ENCODE measurements at regions of chr3 and their contacts with region 1.

Region 1: DNA sequence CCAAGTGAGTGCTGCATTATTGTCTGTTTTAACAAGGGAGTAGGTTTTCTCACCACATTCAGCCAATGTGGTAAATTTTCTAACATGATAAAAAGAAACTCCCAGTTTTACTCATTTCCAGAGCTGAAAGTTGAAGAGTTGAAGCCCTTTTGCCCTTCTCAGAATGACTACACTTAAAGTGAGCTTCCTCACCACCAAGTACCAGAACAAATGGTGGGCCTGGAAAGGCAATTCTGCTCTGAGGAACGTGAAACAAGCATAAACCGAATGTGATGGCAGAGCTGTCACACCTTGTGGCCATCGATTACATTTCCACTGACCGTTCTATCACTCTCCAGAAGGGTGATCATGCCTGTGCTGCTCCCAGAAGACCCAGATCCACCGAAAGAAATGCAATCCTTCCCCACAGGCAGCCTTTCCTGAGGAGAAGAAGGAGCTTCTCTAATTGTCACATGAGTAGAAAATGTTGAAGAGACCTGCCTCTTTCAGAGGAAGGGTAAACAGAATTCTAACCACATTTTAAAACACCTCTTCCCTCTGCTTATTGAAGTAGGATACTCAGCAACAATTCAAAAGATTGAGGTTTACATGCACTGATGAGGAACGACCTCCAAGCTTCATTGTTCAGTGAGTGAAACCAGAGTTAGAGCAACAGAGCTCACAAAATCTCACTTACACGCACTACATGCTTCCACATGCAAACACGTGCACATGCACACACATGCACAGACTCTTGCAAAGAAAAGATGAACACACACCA is 21.4 kb upstream of the CCR9 start:
- DNase-seq: peak; percentile 79
- H3K4me3 Mint-ChIP-seq: peak overlapping the region; percentile 46
- H3K27ac Mint-ChIP-seq: peak overlapping the region; percentile 39
- H3K4me1 Mint-ChIP-seq: peaks cover 41% of the 10 kb centered on the region
- H3K27me3 Mint-ChIP-seq: peaks cover 58% of the 10 kb centered on the region

Region 2: DNA sequence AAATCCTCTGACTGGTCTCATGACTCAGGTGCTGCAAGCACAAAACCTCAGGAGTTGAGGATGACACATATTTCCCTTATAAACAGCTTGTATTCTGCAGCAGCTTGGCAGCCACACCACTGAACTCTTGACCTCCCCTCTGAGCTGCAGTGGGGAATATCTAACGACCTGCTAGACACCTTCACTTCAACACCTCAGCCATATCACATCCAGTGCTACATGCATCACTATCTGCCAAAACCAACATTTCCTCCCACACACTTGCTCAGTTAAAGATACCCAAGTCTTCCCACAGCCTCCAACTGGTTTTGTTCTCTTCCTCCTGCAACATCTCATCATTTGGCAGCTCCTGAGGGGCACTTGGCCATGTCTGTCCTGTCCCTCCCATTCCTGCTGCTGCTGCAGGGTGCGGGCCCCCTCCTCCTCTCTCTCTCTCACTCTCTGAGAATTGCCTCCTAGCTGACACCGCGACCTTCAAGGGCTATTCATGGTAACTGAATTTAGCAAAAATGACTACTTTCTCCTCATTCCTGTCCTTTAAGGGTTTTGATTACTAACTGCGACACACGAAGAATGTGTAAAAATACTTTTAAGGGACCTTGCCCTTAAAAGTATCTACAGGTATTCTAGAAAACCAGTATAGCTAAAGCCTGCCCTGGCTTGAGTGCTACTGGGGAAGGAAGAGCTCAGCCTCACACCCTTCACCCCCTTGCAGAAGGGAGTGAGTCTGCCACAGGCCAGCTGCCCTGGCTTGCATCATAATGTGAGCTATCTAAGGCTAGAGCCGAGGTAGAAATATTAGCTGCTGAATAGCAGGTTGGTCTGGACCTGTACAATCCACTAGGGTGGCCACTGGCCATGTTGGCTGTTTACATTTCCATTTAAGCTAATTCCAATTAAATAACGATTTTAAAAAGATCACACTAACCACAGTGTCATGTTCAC is 16.4 kb after region 1 on chr3:
- intact Hi-C with region 1: loop called (anchors 1 kb)
- DNase-seq: peak; percentile 68
- H3K4me3 Mint-ChIP-seq: no peak overlapping the region
- H3K27ac Mint-ChIP-seq: peak overlapping the region; percentile 17
- H3K4me1 Mint-ChIP-seq: peaks cover 13% of the 10 kb centered on the region
- H3K27me3 Mint-ChIP-seq: peaks cover 45% of the 10 kb centered on the region

Region 3: GRCh38 chr3:45978006-45978761 is 113.2 kb after region 1 on chr3:
- intact Hi-C with region 1: loop called (anchors 5 kb)
- DNase-seq: peak; percentile 91
- H3K4me3 Mint-ChIP-seq: peak overlapping the region; percentile 80
- H3K27ac Mint-ChIP-seq: peak overlapping the region; percentile 95
- H3K4me1 Mint-ChIP-seq: peaks cover 84% of the 10 kb centered on the region
- H3K27me3 Mint-ChIP-seq: no peaks in the 10 kb centered on the region

Region 4: GRCh38 chr3:46098319-46098761 is 233.4 kb after region 1 on chr3:
- intact Hi-C with region 1: loop called (anchors 5 kb)
- DNase-seq: peak; percentile 91
- H3K4me3 Mint-ChIP-seq: peak overlapping the region; percentile 71
- H3K27ac Mint-ChIP-seq: peak overlapping the region; percentile 92
- H3K4me1 Mint-ChIP-seq: peaks cover 59% of the 10 kb centered on the region
- H3K27me3 Mint-ChIP-seq: peaks cover 11% of the 10 kb centered on the region